ENCODE measurements at regions of chr19 and their contacts with region 1.

Region 1: GRCh38 chr19:8654591-8655339 is 24.3 kb downstream of the NFILZ start:
- DNase-seq: peak in 5 of 6 donors; percentile 12 to 87 (median 42)
- ATAC-seq: peak; percentile 69 to 96 (median 89)
- H3K4me3 ChIP-seq: peak overlapping the region in 1 of 4 donors; percentile 25
- H3K27ac ChIP-seq: no peak overlapping the region
- H3K4me1 ChIP-seq: no peaks in the 10 kb centered on the region
- H3K27me3 ChIP-seq: no peaks in the 10 kb centered on the region
- CTCF ChIP-seq: peak; percentile 94 to 98 (median 96)

Region 2: GRCh38 chr19:9075064-9075949 is 420.5 kb after region 1 on chr19:
- intact Hi-C with region 1: loop called in 2 of 3 experiments (anchors 5 to 10 kb)
- DNase-seq: peak; percentile 62 to 80 (median 74)
- ATAC-seq: peak; percentile 88 to 94 (median 90)
- H3K4me3 ChIP-seq: no peak overlapping the region
- H3K27ac ChIP-seq: peak overlapping the region; percentile 23 to 73 (median 56)
- H3K4me1 ChIP-seq: peaks cover 0 to 2% (median 0%) of the 10 kb centered on the region in 3 donors
- H3K27me3 ChIP-seq: no peaks in the 10 kb centered on the region
- CTCF ChIP-seq: no peak